K562 (cell line): ENCODE measurements at regions of chrX and their contacts with region 1.

Region 1: GRCh38 chrX:48021026-48021900 is 14.5 kb downstream of the SPACA5 start:
- DNase-seq: peak; percentile 25 to 52 (median 34)
- ATAC-seq: peak; percentile 78
- H3K4me3 ChIP-seq: peak overlapping the region; percentile 46
- H3K27ac ChIP-seq: peak overlapping the region; percentile 76; the same call in 2 of the 3 replicates
- H3K4me1 ChIP-seq: no peaks in the 10 kb centered on the region
- H3K27me3 ChIP-seq: no peaks in the 10 kb centered on the region
- CTCF ChIP-seq: no peak
- EP300 ChIP-seq: no peak
- POLR2A ChIP-seq: no peak
- RAD21 ChIP-seq: no peak

Region 2: DNA sequence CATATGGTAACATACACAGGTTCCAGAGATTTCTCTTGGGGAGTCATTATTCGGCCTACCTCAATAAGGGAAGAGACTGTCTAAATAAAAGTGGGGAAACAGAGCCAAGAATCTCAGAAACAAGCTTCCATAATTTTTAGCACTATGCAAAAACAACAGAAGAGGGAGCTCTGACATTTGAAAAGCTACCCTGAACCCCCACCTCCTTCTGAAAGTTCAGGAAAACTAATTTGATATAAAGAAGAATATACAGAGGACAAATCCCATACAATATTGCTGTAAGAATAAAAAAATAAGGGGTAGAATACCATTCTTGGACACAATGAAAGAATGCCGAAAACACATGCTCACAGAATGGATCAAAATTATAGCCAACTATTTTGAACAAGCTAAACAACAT is 524.0 kb before region 1 on chrX:
- CTCF ChIA-PET with region 1: interaction called, 23 read pairs
- POLR2A ChIA-PET with region 1: no interaction called
- in situ Hi-C with region 1: loop called (anchors 25 kb)
- intact Hi-C with region 1: no loop called
- DNase-seq: peak in 2 of 4 experiments; percentile 16 to 18
- ATAC-seq: 0 out of 3 replicates have a peak, but pooled peaks have one; percentile 41
- H3K4me3 ChIP-seq: no peak overlapping the region
- H3K27ac ChIP-seq: no peak overlapping the region
- H3K4me1 ChIP-seq: no peaks in the 10 kb centered on the region
- H3K27me3 ChIP-seq: no peaks in the 10 kb centered on the region
- CTCF ChIP-seq: peak; percentile 43 to 71 (median 45); a peak in 4 of 6 replicates
- EP300 ChIP-seq: no peak
- POLR2A ChIP-seq: no peak
- RAD21 ChIP-seq: peak; percentile 32 to 82; a peak in 3 of 4 replicates

Region 3: DNA sequence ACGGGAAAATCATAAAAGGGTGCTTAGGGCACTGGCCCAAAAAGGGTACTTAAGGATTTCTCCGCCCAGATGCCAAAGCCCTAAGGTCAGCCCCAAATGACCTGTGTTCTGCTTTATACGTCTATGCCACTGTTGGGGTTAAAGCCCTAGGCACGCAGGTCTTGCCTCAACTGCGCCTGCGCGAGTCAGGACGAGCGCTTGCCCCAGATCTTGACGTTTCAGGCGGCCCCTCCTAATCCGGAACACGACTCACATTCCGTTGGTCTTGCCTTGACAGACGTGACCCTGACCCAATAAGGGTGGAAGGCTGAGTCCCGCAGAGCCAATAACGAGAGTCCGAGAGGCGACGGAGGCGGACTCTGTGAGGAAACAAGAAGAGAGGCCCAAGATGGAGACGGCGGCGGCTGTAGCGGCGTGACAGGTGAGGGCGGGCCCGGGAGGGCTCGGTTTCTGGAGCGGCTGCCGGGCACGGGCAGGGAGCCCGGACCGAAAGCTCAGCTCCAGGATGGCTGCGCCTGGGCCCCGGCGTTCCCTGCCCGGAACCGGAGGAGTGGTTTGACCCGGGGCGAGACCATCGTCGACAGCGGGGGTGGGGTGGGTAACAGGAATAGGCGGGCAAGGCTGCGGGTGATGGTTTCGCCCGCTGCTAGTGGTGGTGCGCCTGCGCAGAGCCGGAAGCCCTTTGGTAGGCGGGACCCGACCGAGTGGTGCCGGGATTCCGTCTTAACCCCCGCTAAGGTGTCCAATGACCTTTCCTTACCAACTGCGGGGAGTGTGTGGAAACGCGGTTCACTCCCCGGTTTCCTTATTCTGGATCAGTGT is 460.2 kb before region 1 on chrX and contains the start of gene ARAF:
- CTCF ChIA-PET with region 1: interaction called, 4 read pairs
- POLR2A ChIA-PET with region 1: no interaction called
- in situ Hi-C with region 1: no loop called
- intact Hi-C with region 1: loop called (anchors 5 kb)
- DNase-seq: peak; percentile 98 to 99 (median 98)
- ATAC-seq: peak; percentile 94
- H3K4me3 ChIP-seq: peak within 1 kb of the TSS; percentile 56
- H3K27ac ChIP-seq: peak within 1 kb of the TSS; percentile 88
- H3K4me1 ChIP-seq: peaks cover 14 to 25% of the 10 kb centered on the region in 2 experiments
- H3K27me3 ChIP-seq: no peaks in the 10 kb centered on the region
- CTCF ChIP-seq: no peak
- EP300 ChIP-seq: no peak; the same call in 1 of the 2 replicates
- POLR2A ChIP-seq: peak; percentile 90
- RAD21 ChIP-seq: no peak
- polyA plus RNA-seq, gene ARAF: 5.5 to 8.8 TPM

Region 4: GRCh38 chrX:47836164-47837072 is 184.8 kb before region 1 on chrX and contains the start of gene ZNF81:
- CTCF ChIA-PET with region 1: interaction called, 22 read pairs
- POLR2A ChIA-PET with region 1: no interaction called
- in situ Hi-C with region 1: no loop called
- intact Hi-C with region 1: loop called (anchors 1 kb)
- DNase-seq: peak; percentile 85 to 98 (median 90)
- ATAC-seq: peak; percentile 99
- H3K4me3 ChIP-seq: peak within 1 kb of the TSS; percentile 60
- H3K27ac ChIP-seq: peak within 1 kb of the TSS; percentile 62
- H3K4me1 ChIP-seq: no peaks in the 10 kb centered on the region; a peak in 1 of 5 replicates
- H3K27me3 ChIP-seq: no peaks in the 10 kb centered on the region
- CTCF ChIP-seq: no peak
- EP300 ChIP-seq: no peak
- POLR2A ChIP-seq: peak; percentile 70
- RAD21 ChIP-seq: no peak
- polyA plus RNA-seq, gene ZNF81: 9.1 to 9.6 TPM

Region 5: DNA sequence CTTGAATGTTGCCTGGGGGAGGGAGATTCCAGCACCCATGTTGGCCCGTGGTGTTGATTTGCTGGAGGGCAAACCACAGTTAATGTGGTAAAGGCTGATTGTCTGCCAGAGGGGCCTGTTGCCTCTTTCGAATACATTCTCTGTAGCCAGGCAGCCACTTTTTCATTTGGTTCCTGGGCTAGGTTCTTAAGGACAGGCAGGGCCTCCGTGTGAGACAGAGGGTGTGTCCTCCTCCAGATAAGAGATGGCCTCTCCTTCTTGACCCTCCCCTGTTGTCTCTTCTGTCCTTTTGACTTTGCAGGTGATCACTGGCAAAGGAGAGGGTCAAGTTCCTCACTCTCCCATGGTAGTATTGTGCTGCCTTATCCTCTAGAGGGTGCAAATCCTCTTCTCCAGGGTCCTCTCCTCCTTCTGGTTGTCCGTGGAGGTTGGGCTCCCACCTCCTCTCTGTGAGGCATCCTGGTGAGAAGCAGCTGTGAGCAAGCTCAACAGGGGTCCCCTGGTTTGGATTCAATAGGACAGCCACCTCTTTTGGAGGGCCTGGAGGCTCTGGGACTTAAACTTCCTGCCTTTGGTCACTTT is 62.4 kb before region 1 on chrX:
- CTCF ChIA-PET with region 1: no interaction called
- POLR2A ChIA-PET with region 1: no interaction called
- in situ Hi-C with region 1: no loop called
- intact Hi-C with region 1: loop called (anchors 2 kb)
- DNase-seq: peak in 2 of 4 experiments; percentile 11 to 41
- ATAC-seq: peak; percentile 89
- H3K4me3 ChIP-seq: no peak overlapping the region
- H3K27ac ChIP-seq: no peak overlapping the region
- H3K4me1 ChIP-seq: no peaks in the 10 kb centered on the region; a peak in 2 of 5 replicates
- H3K27me3 ChIP-seq: peaks cover 0 to 8% of the 10 kb centered on the region in 2 experiments; a peak in 2 of 5 replicates
- CTCF ChIP-seq: peak; percentile 50 to 64 (median 55)
- EP300 ChIP-seq: no peak
- POLR2A ChIP-seq: no peak
- RAD21 ChIP-seq: 0 out of 4 replicates have a peak, but pooled peaks of 1 of the 2 experiments have one; percentile 7